ENCODE measurements at regions of chr1 and their contacts with region 1.

Region 1: GRCh38 chr1:221741711-221742554 is at the start of gene DUSP10:
- DNase-seq: peak; percentile 99
- H3K4me3 Mint-ChIP-seq: no peak within 1 kb of the TSS
- H3K27ac Mint-ChIP-seq: peak within 1 kb of the TSS; percentile 77
- H3K4me1 Mint-ChIP-seq: peaks cover 9% of the 10 kb centered on the region
- H3K27me3 Mint-ChIP-seq: no peaks in the 10 kb centered on the region
- total RNA-seq, gene DUSP10: 19.2 and 19.4 TPM in 2 replicates

Region 2: GRCh38 chr1:221543529-221544120 is 198.3 kb before region 1 on chr1:
- intact Hi-C with region 1: loop called (anchors 1 kb)
- DNase-seq: no peak
- H3K4me3 Mint-ChIP-seq: no peak overlapping the region
- H3K27ac Mint-ChIP-seq: no peak overlapping the region
- H3K4me1 Mint-ChIP-seq: peaks cover 4% of the 10 kb centered on the region
- H3K27me3 Mint-ChIP-seq: peaks cover 19% of the 10 kb centered on the region

Region 3: DNA sequence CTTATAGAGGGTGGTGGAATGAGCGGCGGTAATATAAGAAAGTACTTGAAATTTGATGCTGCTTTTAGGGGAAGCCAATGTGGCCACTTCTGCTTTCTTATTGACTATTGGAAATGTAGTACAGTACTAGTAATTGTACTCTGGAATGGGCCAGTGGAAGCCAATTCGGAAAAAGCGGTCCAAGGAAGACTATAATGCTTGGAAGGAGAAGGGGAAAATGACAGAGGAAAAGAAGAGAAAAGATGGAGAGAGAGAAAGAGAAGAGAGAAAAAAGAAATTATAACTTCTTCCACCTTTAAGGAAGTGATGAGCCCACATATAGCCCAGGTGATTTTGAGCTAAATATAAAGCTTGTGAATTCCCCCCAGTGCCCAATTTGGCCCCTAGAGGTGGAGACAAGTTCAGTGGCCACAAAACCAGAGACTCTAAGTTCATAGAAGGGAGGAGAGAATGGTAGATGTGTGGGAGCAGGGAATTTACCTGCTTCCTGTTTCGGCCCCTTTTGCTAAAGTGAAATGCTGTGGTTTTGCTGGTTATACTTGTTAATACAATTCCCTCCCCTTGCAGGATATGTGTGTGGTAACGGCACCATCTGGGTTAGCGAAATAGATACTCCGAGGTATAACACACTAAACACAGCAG is 35.6 kb after region 1 on chr1:
- intact Hi-C with region 1: loop called (anchors 1 kb)
- DNase-seq: peak; percentile 55
- H3K4me3 Mint-ChIP-seq: peak overlapping the region; percentile 79
- H3K27ac Mint-ChIP-seq: peak overlapping the region; percentile 98
- H3K4me1 Mint-ChIP-seq: peaks cover 92% of the 10 kb centered on the region
- H3K27me3 Mint-ChIP-seq: no peaks in the 10 kb centered on the region

Region 4: GRCh38 chr1:221839796-221840395 is 98.0 kb after region 1 on chr1:
- intact Hi-C with region 1: loop called (anchors 1 kb)
- DNase-seq: peak; percentile 26
- H3K4me3 Mint-ChIP-seq: no peak overlapping the region
- H3K27ac Mint-ChIP-seq: peak overlapping the region; percentile 64
- H3K4me1 Mint-ChIP-seq: peaks cover 57% of the 10 kb centered on the region
- H3K27me3 Mint-ChIP-seq: peaks cover 2% of the 10 kb centered on the region

Region 5: GRCh38 chr1:222171005-222171404 is 429.1 kb after region 1 on chr1:
- intact Hi-C with region 1: loop called (anchors 10 kb)
- DNase-seq: no peak
- H3K4me3 Mint-ChIP-seq: no peak overlapping the region
- H3K27ac Mint-ChIP-seq: no peak overlapping the region
- H3K4me1 Mint-ChIP-seq: no peaks in the 10 kb centered on the region
- H3K27me3 Mint-ChIP-seq: no peaks in the 10 kb centered on the region